ENCODE measurements at regions of chr12 and their contacts with region 1.

Region 1: DNA sequence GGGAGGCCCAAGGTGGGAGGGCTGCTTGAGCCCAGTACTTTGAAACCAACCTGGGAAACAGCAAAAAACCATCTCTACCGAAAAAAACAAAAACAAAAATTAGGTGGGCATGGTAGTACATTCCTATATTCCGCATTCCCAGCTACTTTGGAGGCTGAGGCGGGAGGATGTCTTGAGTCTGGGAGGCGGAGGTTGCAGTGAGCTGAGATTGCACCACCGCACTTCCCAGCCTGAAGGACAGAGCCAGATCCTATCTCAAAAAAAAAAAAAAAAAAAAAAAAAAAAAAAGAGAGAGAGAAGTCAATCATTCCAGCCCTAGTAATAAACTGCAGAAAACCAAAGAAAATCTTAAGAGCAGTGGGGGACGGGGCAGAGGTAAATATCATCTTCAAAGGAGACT is 46.0 kb downstream of the ANAPC7 start:
- DNase-seq: no peak
- H3K4me3 ChIP-seq: no peak overlapping the region
- H3K27ac ChIP-seq: no peak overlapping the region
- H3K4me1 ChIP-seq: peaks cover 15 to 35% (median 27%) of the 10 kb centered on the region in 4 experiments
- H3K27me3 ChIP-seq: no peaks in the 10 kb centered on the region

Region 2: GRCh38 chr12:110371408-110372055 is 14.0 kb after region 1 on chr12:
- CTCF ChIA-PET with region 1: interaction called, 14 read pairs
- POLR2A ChIA-PET with region 1: no interaction called
- DNase-seq: no peak
- H3K4me3 ChIP-seq: no peak overlapping the region
- H3K27ac ChIP-seq: no peak overlapping the region
- H3K4me1 ChIP-seq: peaks cover 0 to 15% (median 11%) of the 10 kb centered on the region in 4 experiments
- H3K27me3 ChIP-seq: no peaks in the 10 kb centered on the region

Region 3: GRCh38 chr12:110590806-110591326 is 233.3 kb after region 1 on chr12:
- CTCF ChIA-PET with region 1: no interaction called
- POLR2A ChIA-PET with region 1: no interaction called
- DNase-seq: peak; percentile 94 to 98 (median 97)
- H3K4me3 ChIP-seq: peak overlapping the region in 2 of 7 experiments; percentile 37 to 39
- H3K27ac ChIP-seq: peak overlapping the region; percentile 83 to 93
- H3K4me1 ChIP-seq: peaks cover 11 to 33% (median 28%) of the 10 kb centered on the region in 4 experiments
- H3K27me3 ChIP-seq: no peaks in the 10 kb centered on the region

Measured in common myeloid progenitor, CD34-positive (primary cell).